ENCODE measurements at regions of chr14 and their contacts with region 1.

Region 1: DNA sequence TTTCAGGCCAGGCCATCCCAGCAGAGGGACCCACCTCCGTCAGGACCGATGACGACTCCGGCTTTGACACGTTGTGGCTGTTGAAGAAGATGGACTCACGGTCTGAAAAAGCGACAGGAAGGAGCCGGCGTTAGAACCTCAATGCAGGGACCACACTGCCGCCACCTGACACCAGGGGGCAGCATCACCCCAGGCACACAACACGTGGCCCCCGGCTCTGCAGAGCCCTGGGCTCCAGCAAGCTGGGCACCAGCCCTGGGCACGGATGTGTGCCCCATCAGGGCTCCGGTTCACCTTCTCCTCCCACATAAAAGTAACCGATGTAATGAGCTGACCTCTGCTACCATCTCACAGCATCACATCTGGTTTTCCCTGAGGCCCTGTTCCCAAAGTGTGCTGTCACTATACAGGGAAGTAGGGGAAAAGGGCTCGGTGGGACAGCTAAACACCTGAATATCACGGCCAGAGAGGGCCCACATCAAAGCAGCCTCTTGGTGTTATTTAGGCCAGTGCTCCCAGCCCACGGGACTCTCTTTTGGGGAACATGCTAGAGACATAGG is 29.0 kb downstream of the CHGA start:
- DNase-seq: peak; percentile 95
- H3K4me3 ChIP-seq: no peak overlapping the region
- H3K27ac ChIP-seq: peak overlapping the region; percentile 37 to 53 (median 44)
- H3K4me1 ChIP-seq: peaks cover 37 to 43% (median 41%) of the 10 kb centered on the region in 4 donors
- H3K27me3 ChIP-seq: no peaks in the 10 kb centered on the region
- CTCF ChIP-seq: peak; percentile 94 to 98 (median 97)
- EP300 ChIP-seq: no peak
- POLR2A ChIP-seq: no peak

Region 2: GRCh38 chr14:93137864-93138263 is 185.9 kb after region 1 on chr14:
- intact Hi-C with region 1: loop called (anchors 2 kb)
- DNase-seq: no peak
- H3K4me3 ChIP-seq: no peak overlapping the region
- H3K27ac ChIP-seq: no peak overlapping the region
- H3K4me1 ChIP-seq: peaks cover 6 to 31% (median 10%) of the 10 kb centered on the region in 4 donors
- H3K27me3 ChIP-seq: no peaks in the 10 kb centered on the region
- CTCF ChIP-seq: peak in 2 of 3 experiments; percentile 27 to 40
- EP300 ChIP-seq: no peak
- POLR2A ChIP-seq: no peak

Measured in esophagus muscularis mucosa (tissue), 4 donors.